Dorsolateral prefrontal cortex (tissue), 120 donors: ENCODE measurements at regions of chr10 and their contacts with region 1.

Region 1: GRCh38 chr10:102114861-102115618 is 5.1 kb downstream of the LDB1 start:
- DNase-seq: peak; percentile 85 to 96 (median 92)
- H3K4me3 ChIP-seq: peak overlapping the region; percentile 50 to 94 (median 74)
- H3K27ac ChIP-seq: peak overlapping the region; percentile 65 to 100 (median 97)
- H3K27me3 ChIP-seq: no peaks in the 10 kb centered on the region
- CTCF ChIP-seq: peak in 15 of 56 donors; percentile 4 to 35 (median 19)

Region 2: GRCh38 chr10:101818119-101818871 is 296.7 kb before region 1 on chr10 and contains the start of gene OGA:
- intact Hi-C with region 1: loop called in 1 of 2 experiments (anchors 5 kb)
- DNase-seq: peak; percentile 93 to 99 (median 97)
- H3K4me3 ChIP-seq: peak within 1 kb of the TSS; percentile 61 to 100 (median 99)
- H3K27ac ChIP-seq: peak within 1 kb of the TSS; percentile 68 to 100 (median 97)
- H3K27me3 ChIP-seq: no peaks in the 10 kb centered on the region
- CTCF ChIP-seq: peak in 10 of 56 donors; percentile 0 to 31 (median 8)
- total RNA-seq, gene OGA: 163 to 362 (median 249) TPM

Region 3: DNA sequence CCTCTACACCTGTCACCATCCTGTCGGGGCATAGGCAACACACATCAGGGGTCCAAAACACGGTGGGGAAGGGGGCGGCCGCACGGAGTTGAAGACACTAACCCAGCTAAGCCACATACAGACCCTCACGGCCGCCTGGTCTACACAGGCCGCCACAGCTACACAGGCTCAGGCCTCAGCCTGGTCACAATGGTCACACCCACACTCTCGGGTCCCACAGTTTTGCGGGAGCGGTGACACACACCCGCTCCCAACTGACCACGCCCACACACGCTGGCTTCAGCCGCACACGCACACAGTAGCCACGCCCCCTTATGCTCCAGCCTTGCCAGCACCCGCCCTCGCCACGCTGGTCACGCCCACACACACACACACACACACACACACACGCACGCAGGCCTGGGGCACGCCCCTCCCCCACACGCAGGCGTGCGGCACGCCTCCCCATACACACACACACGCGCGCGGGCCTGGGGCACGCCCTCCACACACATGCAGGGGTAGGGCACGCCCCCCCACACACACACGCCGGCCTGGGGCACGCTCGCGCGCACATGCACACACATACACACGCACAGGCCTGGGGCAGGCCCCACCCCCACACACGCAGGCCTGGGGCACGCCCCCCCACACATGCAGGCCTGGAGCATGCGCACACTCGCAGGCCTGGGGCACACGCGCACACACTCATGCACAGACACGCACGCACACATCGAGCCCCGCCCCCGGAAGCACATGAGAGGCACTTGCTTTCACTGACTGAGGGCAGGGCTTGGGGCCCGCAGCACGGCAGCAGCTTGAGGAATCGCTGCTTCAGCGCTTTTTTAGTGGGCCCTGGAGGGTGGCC is 284.5 kb before region 1 on chr10:
- intact Hi-C with region 1: loop called in 1 of 2 experiments (anchors 5 kb)
- DNase-seq: peak; percentile 46 to 80 (median 70)
- H3K4me3 ChIP-seq: peak overlapping the region; percentile 25 to 71 (median 54)
- H3K27ac ChIP-seq: peak overlapping the region in 45 of 59 donors; percentile 18 to 78 (median 61)
- H3K27me3 ChIP-seq: no peaks in the 10 kb centered on the region
- CTCF ChIP-seq: peak in 1 of 56 donors; percentile 23

Region 4: GRCh38 chr10:101974091-101974971 is 140.7 kb before region 1 on chr10:
- intact Hi-C with region 1: no loop called
- DNase-seq: no peak
- H3K4me3 ChIP-seq: peak overlapping the region in 19 of 59 donors; percentile 1 to 57 (median 27)
- H3K27ac ChIP-seq: peak overlapping the region in 32 of 59 donors; percentile 7 to 77 (median 52)
- H3K27me3 ChIP-seq: no peaks in the 10 kb centered on the region
- CTCF ChIP-seq: no peak

Region 5: DNA sequence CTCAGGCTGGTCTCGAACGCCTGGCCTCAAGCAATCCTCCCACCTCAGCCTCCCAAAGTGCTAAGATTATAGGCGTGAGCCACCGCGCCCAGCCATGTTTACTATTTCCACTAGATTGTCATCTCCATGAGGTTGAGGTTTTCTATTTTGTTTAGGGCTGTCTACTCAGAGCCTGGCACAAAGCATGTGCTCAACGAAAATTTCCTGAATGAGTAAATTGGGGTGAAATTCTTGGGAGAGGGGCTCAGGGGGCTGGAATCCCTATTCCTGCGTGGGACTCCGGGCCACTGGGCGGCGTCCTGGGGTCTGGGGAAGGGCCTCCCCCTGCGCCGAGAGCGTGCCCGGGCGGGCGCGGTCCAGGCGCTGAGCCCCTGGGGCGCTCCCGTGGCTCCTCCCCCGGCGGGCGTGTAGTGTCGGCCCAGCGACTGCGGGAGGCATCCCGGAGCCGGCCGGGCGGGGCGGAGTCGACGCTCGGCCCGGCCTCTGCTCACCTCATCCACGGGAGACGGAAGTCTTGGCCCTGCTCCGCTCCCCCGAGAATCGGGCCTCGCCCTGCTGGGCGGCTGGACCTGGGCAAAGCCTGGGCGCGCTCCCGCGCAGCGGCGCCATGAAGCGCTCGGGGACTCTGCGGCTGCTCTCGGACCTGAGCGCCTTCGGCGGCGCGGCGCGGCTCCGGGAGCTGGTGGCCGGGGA is 50.0 kb before region 1 on chr10 and contains the start of gene HPS6:
- intact Hi-C with region 1: loop called (anchors 2 to 5 kb)
- DNase-seq: peak; percentile 61 to 91 (median 79)
- H3K4me3 ChIP-seq: peak within 1 kb of the TSS; percentile 49 to 98 (median 90)
- H3K27ac ChIP-seq: peak within 1 kb of the TSS in 58 of 59 donors; percentile 24 to 94 (median 84)
- H3K27me3 ChIP-seq: no peaks in the 10 kb centered on the region
- CTCF ChIP-seq: peak in 50 of 56 donors; percentile 5 to 65 (median 40)
- total RNA-seq, gene HPS6: 8.7 to 18.4 (median 13.9) TPM

Region 6: DNA sequence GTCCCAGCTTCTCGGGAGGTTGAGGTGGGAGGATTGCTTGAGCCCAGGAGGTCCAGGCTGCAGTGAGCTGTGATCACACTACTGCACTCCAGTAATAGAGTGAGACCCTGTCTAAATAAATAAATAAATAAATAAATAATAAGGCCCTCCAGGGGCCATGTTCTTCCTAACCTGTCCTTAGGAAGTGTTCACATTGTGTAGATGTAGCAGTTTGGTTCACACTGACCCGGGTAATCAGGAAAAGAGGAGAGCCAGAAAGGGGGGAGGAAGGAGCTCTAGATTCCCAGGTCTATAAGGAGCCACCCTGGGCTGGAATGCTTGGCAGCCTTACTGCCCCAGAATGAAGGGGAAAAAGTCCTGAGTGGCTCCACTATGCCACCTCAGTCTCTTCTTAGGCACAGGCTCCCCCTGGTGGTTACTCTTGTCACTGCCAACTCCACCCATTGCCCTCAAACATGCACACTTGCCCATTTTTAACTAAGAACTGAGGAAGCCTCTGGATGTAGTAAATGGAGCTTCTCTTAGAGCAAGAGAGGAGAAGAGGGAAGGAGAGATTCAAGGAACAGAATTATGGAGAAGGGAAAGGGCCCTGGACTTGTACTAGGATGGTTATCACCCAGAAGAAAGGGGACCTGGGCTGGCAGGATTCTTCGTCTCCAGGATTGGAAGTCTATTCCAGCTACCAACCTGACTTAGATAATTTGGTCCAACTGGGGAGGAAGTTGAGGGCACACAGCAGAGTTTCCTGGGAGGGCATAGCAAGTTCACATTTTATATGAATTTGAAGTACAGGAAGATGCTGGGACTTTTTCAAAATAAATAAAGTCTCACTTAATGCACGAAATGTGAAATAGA is 42.1 kb before region 1 on chr10:
- intact Hi-C with region 1: loop called (anchors 5 kb)
- DNase-seq: peak; percentile 71 to 91 (median 82)
- H3K4me3 ChIP-seq: no peak overlapping the region
- H3K27ac ChIP-seq: no peak overlapping the region
- H3K27me3 ChIP-seq: no peaks in the 10 kb centered on the region
- CTCF ChIP-seq: peak; percentile 78 to 97 (median 93)

Region 7: GRCh38 chr10:102159051-102159597 is 44.1 kb after region 1 on chr10:
- intact Hi-C with region 1: no loop called
- DNase-seq: no peak
- H3K4me3 ChIP-seq: no peak overlapping the region
- H3K27ac ChIP-seq: peak overlapping the region in 1 of 59 donors; percentile 66
- H3K27me3 ChIP-seq: no peaks in the 10 kb centered on the region
- CTCF ChIP-seq: no peak